Activated naive CD8-positive, alpha-beta T cell treated with anti-CD3 and anti-CD28 coated beads, Interleukin-2, amount 10 ng/mL, durations not matched to agents 7 days and 5 days (primary cell): ENCODE measurements at regions of chr1 and their contacts with region 1.

Region 1: DNA sequence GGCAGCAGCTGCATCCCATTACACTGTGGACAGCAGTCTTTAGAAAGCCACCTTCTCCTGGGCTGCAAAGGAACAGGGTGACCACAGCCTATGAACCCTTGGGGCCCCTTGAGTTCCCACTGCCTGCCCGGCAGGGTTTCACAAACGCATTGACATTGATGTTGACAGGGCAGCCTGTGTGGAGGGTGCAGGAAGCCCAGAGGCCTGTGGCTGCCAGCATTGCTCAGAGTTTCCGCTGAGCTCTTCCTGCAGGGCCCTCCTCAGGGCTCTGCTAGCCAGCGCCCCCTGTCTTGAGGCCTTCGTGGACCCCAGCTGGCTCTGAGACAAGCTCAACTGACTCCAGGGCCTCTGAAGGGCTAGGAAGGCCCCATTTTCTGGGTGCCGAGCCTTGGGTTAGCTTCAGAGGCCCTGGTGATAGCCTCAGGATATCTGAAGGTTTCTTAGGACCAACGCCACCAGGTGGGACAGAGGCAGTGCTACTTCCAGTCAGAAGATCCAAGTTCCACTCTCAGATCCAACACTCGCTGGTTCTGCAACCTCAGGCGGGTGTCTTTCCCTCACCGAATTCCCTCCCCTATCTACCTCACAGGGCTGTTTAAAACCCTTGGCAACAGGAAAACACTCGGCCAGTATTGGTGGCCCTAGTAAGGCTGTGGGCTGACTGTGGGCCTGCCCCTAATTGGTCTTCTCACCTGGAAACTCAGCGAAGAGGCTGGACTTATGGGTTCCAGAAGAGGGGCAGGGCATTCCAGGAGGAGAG is 27.2 kb upstream of the EPS8L3 start:
- DNase-seq: peak; percentile 86
- ATAC-seq: peak; percentile 97
- H3K4me3 Mint-ChIP-seq: peak overlapping the region; percentile 63
- H3K27ac Mint-ChIP-seq: peak overlapping the region; percentile 85
- H3K4me1 Mint-ChIP-seq: peaks cover 66% of the 10 kb centered on the region
- H3K27me3 Mint-ChIP-seq: no peaks in the 10 kb centered on the region

Region 2: GRCh38 chr1:109704173-109704572 is 86.7 kb before region 1 on chr1:
- POLR2A ChIA-PET with region 1: no interaction called
- DNase-seq: no peak
- ATAC-seq: no peak
- H3K4me3 Mint-ChIP-seq: no peak overlapping the region
- H3K27ac Mint-ChIP-seq: no peak overlapping the region
- H3K4me1 Mint-ChIP-seq: no peaks in the 10 kb centered on the region
- H3K27me3 Mint-ChIP-seq: no peaks in the 10 kb centered on the region

Region 3: GRCh38 chr1:109802901-109803561 is 12.1 kb after region 1 on chr1:
- POLR2A ChIA-PET with region 1: interaction called, 61 read pairs
- DNase-seq: peak; percentile 34
- ATAC-seq: no peak
- H3K4me3 Mint-ChIP-seq: peak overlapping the region; percentile 78
- H3K27ac Mint-ChIP-seq: peak overlapping the region; percentile 97
- H3K4me1 Mint-ChIP-seq: peaks cover 73% of the 10 kb centered on the region
- H3K27me3 Mint-ChIP-seq: no peaks in the 10 kb centered on the region